Activated B cell treated with CpG ODN at 0.5 μM for 24 hours (primary cell): ENCODE measurements at regions of chr19 and their contacts with region 1.

Region 1: GRCh38 chr19:41563854-41564514 is 12.0 kb upstream of the CEACAM21 start:
- DNase-seq: no peak
- ATAC-seq: peak; percentile 51
- H3K4me3 Mint-ChIP-seq: peak overlapping the region; percentile 83
- H3K27ac Mint-ChIP-seq: peak overlapping the region; percentile 53
- H3K4me1 Mint-ChIP-seq: peaks cover 55% of the 10 kb centered on the region
- H3K27me3 Mint-ChIP-seq: peaks cover 9% of the 10 kb centered on the region
- CTCF ChIP-seq: no peak

Region 2: DNA sequence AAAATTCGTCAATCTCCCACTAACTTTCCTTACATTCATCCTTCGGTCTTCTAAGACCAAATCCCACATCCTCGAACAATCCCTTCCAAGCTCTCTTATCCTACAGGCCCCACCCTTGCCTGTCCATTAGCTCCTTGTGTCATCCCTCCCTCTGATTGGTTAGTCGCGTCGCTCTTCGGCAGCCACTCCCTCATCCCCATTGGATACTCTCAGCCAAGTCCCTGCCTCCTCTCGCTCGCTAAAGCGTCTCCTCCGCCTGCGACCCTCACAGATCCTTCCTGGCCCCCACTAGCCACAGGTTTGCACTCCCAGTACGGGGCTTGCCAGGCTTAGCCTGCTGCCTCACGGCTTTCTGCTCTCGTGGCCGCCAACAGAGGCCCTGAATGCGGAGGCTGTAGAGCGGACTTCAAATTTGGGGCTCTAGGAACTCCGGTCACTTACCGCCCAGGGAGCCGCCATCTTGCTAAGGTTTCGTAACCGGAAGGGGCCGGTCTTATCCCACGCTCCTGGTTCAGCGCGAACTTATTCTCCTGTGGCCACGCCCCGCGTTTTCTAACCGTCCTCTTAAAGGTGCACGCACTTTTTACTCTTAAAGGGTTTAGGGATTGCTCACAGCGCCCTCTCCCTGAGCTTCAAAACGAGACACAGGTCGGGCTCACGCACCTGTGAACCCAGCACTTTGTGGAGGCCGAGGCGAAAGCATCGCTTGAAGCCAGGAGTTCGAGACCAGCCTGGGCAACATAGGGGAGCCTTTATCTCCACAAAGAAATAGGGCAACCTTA is 124.4 kb before region 1 on chr19 and contains the start of gene DMAC2:
- CTCF ChIA-PET with region 1: interaction called, 344 read pairs
- POLR2A ChIA-PET with region 1: no interaction called
- intact Hi-C with region 1: no loop called
- DNase-seq: peak; percentile 78
- ATAC-seq: peak; percentile 97
- H3K4me3 Mint-ChIP-seq: no peak within 1 kb of the TSS
- H3K27ac Mint-ChIP-seq: no peak within 1 kb of the TSS
- H3K4me1 Mint-ChIP-seq: peaks cover 7% of the 10 kb centered on the region
- H3K27me3 Mint-ChIP-seq: no peaks in the 10 kb centered on the region
- CTCF ChIP-seq: no peak
- total RNA-seq, gene DMAC2: 38.2 and 45.7 TPM in 2 replicates

Region 3: GRCh38 chr19:41521931-41522555 is 41.9 kb before region 1 on chr19:
- CTCF ChIA-PET with region 1: interaction called, 7 read pairs
- POLR2A ChIA-PET with region 1: interaction called, 9 read pairs
- intact Hi-C with region 1: loop called (anchors 1 kb)
- DNase-seq: peak; percentile 59
- ATAC-seq: peak; percentile 43
- H3K4me3 Mint-ChIP-seq: peak overlapping the region; percentile 85
- H3K27ac Mint-ChIP-seq: peak overlapping the region; percentile 98
- H3K4me1 Mint-ChIP-seq: peaks cover 43% of the 10 kb centered on the region
- H3K27me3 Mint-ChIP-seq: no peaks in the 10 kb centered on the region
- CTCF ChIP-seq: no peak

Region 4: DNA sequence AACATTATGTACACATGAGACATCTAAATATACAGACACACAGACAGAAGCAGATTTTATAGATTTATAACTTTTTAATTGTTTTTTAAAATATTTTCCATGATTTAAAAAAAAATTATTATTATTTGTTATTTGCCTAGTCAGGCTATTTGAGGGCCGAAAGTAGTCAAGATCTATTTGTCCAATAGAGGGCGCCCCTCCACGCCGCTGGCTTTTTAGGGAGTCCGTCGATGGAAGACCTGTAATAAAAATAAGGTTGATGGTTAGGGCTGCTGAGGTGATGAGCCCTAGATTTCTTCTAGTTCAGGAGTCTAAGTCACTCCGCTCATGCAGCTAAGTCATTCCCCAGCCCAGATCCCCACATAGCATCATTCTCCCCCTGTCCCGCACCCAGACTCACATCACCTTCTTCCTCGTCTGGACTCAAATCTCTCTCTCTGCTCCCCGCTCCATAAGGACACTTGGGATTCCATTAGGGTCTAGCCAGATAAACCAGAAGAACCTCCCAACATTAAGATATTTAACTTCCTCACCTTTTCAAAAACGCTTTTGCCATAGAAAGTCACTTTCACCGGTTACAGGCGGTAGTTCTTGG is 21.9 kb before region 1 on chr19:
- CTCF ChIA-PET with region 1: interaction called, 104 read pairs
- POLR2A ChIA-PET with region 1: interaction called, 23 read pairs
- intact Hi-C with region 1: loop called (anchors 1 kb)
- DNase-seq: peak; percentile 56
- ATAC-seq: no peak
- H3K4me3 Mint-ChIP-seq: peak overlapping the region; percentile 70
- H3K27ac Mint-ChIP-seq: peak overlapping the region; percentile 57
- H3K4me1 Mint-ChIP-seq: peaks cover 59% of the 10 kb centered on the region
- H3K27me3 Mint-ChIP-seq: no peaks in the 10 kb centered on the region
- CTCF ChIP-seq: no peak

Region 5: DNA sequence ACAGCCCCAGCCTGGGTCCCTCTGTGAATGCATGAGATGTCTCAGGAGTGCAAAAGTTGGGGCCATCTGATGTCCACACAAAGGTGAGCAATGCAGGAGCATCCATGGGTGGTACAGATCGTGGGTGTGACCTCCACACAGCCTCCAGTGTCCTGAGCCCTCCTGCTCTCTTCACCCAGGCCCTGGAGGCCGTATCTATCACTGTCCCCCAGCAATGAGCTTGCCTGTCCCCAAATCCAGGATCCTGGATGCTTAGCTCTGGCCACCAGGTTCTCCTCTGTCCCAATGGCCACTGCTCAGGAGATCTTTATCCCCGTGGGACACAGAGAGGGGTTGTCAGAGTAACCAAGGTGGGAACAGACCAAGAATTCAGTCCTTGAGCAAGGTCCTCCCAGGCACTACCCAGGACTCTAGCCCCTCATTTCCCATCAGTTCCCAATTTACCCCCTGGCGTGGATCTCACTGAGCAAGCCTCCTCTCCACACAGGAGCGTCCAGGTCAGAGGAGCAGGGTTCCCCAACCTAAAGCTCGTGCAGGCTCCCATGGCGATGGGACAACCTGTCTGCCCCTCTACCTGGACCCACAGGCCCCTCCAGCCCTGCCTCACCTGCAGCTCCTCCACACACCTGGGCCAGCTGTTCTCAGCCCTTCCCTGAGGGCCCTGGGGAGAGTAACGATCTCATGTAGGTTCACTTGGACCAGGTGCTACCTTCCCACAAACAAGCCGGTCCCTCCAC is 23.3 kb after region 1 on chr19:
- CTCF ChIA-PET with region 1: no interaction called
- POLR2A ChIA-PET with region 1: no interaction called
- intact Hi-C with region 1: no loop called
- DNase-seq: no peak
- ATAC-seq: no peak
- H3K4me3 Mint-ChIP-seq: no peak overlapping the region
- H3K27ac Mint-ChIP-seq: no peak overlapping the region
- H3K4me1 Mint-ChIP-seq: no peaks in the 10 kb centered on the region
- H3K27me3 Mint-ChIP-seq: peaks cover 2% of the 10 kb centered on the region
- CTCF ChIP-seq: no peak

Region 6: DNA sequence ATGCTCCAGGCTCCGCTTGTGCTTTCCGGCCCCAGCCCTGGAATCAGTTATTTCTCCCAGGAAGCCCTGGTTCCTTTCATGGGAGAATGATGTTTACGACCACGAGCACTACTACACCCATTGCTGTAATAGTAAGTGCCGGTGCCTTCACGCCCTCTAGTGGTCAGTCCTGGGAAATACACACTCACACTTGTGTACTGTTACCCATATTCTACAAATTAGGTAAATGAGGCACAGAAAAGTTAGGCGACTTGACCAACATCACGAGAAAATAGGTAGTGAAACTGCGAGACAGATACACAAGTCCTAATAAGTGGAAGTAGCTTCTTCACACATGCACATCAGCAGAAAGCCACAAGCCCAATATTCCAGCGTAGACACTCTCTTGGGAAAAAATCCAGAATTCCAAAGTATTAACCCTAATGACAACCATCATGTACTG is 33.6 kb after region 1 on chr19:
- CTCF ChIA-PET with region 1: interaction called, 9 read pairs
- POLR2A ChIA-PET with region 1: interaction called, 4 read pairs
- intact Hi-C with region 1: loop called (anchors 1 kb)
- DNase-seq: peak; percentile 25
- ATAC-seq: peak; percentile 90
- H3K4me3 Mint-ChIP-seq: no peak overlapping the region
- H3K27ac Mint-ChIP-seq: peak overlapping the region; percentile 75
- H3K4me1 Mint-ChIP-seq: peaks cover 11% of the 10 kb centered on the region
- H3K27me3 Mint-ChIP-seq: peaks cover 3% of the 10 kb centered on the region
- CTCF ChIP-seq: peak; percentile 88